Naive thymus-derived CD4-positive, alpha-beta T cell (primary cell): ENCODE measurements at regions of chr19 and their contacts with region 1.

Region 1: DNA sequence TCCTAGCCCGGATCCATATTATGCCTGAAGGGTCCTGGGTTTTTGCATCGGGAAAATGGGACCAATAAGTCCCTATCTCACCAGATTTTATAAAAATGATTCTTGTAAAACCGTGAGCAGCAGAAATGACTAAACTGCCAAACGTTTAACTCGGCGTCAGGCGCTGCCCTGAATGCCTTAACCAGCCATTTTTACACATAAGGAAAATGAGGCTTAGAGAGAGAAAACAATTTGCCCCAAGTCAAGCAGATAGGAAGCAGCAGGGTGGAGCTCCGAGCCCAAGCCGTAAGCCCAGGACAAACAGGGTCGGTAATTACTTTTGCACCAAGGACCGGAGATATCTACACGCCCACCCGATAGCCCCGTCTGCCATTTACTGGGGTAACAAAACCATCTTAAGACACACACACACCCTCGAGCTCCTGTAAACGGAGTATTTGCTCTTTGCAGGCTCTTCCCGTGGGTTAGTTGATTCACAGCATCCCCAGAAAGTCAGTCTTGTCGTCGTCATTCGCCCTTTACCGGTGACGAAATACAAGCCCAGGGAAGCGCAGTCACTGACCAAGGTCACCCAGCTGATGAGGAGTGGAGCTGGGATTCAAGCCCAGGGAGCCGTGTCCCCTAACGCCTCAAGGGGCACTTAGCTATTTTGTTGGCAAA is 16.0 kb upstream of the MRI1 start:
- DNase-seq: peak in 1 of 9 donors; percentile 27
- ATAC-seq: no peak
- H3K4me3 ChIP-seq: peak overlapping the region; percentile 72
- H3K4me3 Mint-ChIP-seq: peak overlapping the region; percentile 84 to 96 (median 90)
- H3K27ac ChIP-seq: peak overlapping the region; percentile 99
- H3K27ac Mint-ChIP-seq: peak overlapping the region; percentile 80 to 97 (median 94)
- H3K4me1 ChIP-seq: peaks cover 10 to 17% of the 10 kb centered on the region in 2 donors
- H3K4me1 Mint-ChIP-seq: peaks cover 15 to 46% (median 28%) of the 10 kb centered on the region in 7 donors
- H3K27me3 ChIP-seq: no peaks in the 10 kb centered on the region
- H3K27me3 Mint-ChIP-seq: no peaks in the 10 kb centered on the region

Region 2: GRCh38 chr19:13557756-13558398 is 190.4 kb before region 1 on chr19:
- CTCF ChIA-PET with region 1: no interaction called
- POLR2A ChIA-PET with region 1: no interaction called
- intact Hi-C with region 1: no loop called
- DNase-seq: peak in 2 of 9 donors; percentile 14 to 16
- ATAC-seq: no peak
- H3K4me3 ChIP-seq: no peak overlapping the region
- H3K4me3 Mint-ChIP-seq: no peak overlapping the region
- H3K27ac ChIP-seq: no peak overlapping the region
- H3K27ac Mint-ChIP-seq: no peak overlapping the region
- H3K4me1 ChIP-seq: no peaks in the 10 kb centered on the region
- H3K4me1 Mint-ChIP-seq: peaks cover 0 to 2% (median 0%) of the 10 kb centered on the region in 7 donors
- H3K27me3 ChIP-seq: peaks cover 0 to 3% of the 10 kb centered on the region in 2 donors
- H3K27me3 Mint-ChIP-seq: peaks cover 6 to 45% (median 27%) of the 10 kb centered on the region in 5 donors

Region 3: DNA sequence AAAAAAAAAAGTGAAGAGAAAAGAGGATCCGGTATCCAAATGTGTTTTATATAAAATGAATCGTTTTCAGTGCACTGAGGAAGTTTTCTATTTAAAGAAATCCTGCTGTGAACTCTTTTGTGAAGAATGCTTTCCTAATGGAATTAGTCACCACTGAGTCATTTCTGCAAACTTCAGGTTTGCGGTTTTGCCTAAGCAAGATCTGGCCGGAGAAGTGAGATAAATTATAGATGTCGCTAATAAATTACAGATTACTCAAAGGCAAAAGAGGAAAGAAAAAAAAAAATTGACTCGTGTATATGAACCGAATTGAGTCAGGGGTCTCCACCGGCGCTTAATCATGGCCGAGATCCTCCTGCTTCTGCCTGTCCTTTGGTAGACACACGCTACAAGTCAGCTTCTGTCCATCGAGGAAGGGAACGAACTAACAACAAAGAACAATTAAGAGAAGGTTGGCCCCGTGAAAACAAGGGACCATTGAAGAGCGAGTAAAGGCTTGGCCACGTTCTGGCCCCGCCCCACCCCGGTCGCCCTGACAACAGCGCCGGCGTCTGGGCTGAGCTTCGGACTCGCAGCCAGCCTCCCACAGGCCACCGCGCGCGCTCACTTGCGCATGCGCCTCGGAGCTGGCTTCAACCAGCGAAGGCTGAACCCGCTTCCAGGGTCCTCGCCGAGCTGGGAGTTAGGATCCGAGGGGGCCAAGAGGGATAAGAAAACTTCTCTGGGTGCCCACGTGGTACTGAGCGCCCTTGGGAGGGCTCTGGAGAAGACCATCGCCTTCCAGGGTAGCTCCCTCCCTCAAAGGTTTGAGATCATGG is 16.9 kb before region 1 on chr19:
- CTCF ChIA-PET with region 1: interaction called, 6 read pairs
- POLR2A ChIA-PET with region 1: interaction called, 32 read pairs
- intact Hi-C with region 1: loop called (anchors 1 kb)
- DNase-seq: peak; percentile 85 to 95 (median 91)
- ATAC-seq: peak; percentile 100
- H3K4me3 ChIP-seq: peak overlapping the region; percentile 89
- H3K4me3 Mint-ChIP-seq: peak overlapping the region; percentile 82 to 95 (median 92)
- H3K27ac ChIP-seq: peak overlapping the region; percentile 75
- H3K27ac Mint-ChIP-seq: peak overlapping the region; percentile 68 to 95 (median 88)
- H3K4me1 ChIP-seq: peaks cover 3 to 7% of the 10 kb centered on the region in 2 donors
- H3K4me1 Mint-ChIP-seq: peaks cover 6 to 19% (median 11%) of the 10 kb centered on the region in 7 donors
- H3K27me3 ChIP-seq: no peaks in the 10 kb centered on the region
- H3K27me3 Mint-ChIP-seq: no peaks in the 10 kb centered on the region

Region 4: DNA sequence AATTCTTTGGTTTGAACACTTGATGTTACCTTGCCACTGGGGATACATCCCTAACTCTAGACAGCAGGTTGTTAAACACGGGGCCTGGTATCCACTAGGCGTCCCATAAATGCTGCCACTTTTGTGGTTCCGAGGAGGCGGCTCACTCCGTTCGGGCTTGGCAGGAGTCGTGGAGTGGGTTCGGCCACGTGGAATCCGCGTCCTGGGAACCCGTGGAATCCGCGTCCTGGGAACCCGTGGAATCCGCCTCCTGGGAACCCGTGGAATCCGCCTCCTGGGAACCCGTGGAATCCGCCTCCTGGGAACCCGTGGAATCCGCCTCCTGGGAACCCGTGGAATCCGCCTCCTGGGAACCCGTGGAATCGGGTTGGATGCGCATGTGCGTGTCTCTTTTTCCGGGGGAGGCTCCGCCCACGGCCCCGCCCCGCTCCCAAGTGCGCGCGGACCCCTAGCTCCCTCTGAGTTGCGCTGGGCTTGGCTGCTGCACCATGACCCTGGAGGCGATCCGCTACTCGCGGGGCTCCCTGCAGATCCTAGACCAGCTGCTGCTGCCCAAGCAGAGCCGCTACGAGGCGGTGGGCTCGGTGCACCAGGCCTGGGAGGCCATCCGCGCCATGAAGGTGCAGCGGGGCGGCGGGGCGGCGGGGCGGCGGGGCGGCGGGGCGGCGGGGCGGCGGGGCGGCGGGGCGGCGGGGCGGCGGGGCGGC is 16.0 kb after region 1 on chr19 and contains the start of gene MRI1:
- CTCF ChIA-PET with region 1: no interaction called
- POLR2A ChIA-PET with region 1: interaction called, 8 read pairs
- intact Hi-C with region 1: loop called (anchors 1 to 2 kb)
- DNase-seq: peak; percentile 23 to 70 (median 43)
- ATAC-seq: peak; percentile 85
- H3K4me3 ChIP-seq: peak within 1 kb of the TSS; percentile 67
- H3K4me3 Mint-ChIP-seq: peak within 1 kb of the TSS; percentile 76 to 94 (median 90)
- H3K27ac ChIP-seq: peak within 1 kb of the TSS; percentile 84
- H3K27ac Mint-ChIP-seq: peak within 1 kb of the TSS; percentile 82 to 94 (median 89)
- H3K4me1 ChIP-seq: peaks cover 0 to 11% of the 10 kb centered on the region in 2 donors
- H3K4me1 Mint-ChIP-seq: peaks cover 8 to 25% (median 18%) of the 10 kb centered on the region in 7 donors
- H3K27me3 ChIP-seq: no peaks in the 10 kb centered on the region
- H3K27me3 Mint-ChIP-seq: no peaks in the 10 kb centered on the region
- total RNA-seq, gene MRI1: 29.1 to 56.2 (median 49.2) TPM

Region 5: DNA sequence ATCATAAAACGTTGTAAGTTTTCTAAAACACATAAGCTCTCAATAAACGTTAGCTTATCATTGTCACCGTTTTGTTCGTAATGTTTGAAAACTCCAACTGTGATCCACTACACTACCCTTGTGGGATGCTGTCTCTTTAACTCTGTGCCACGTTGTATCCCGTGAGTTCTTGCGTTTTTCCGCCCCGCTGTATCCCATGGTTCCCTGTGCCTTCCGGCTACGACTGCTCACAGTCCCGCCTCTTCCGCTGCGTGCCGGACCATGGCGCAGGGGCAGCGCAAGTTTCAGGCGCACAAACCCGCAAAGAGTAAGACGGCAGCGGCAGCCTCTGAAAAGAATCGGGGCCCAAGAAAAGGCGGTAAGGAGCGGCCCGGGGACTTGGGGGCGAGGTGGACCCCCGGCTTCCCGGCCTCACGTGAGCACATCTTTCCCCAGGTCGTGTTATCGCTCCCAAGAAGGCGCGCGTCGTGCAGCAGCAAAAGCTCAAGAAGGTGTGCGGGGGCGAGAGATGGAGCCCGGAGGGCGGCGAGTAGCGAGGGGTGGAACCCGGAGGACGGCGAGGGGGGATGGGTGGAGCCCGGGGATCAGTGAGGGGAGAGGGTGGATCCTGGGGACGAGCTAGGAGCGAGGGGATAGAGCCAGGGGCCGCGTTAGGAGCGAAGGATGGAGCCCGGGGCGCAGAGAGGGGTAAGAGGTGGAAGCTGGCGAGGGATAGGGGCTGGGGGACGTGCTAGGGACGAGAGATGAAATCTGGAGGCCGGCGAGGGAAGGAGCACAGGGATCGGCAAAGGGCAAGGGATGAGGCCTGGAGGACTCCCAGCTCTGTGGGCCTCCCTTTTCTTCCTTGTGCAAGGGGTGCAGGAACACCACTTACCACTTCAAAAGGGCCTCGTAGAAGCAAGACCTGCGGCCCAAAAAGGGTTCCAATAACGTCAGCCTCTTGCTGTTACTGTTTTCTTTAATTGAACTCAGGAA is 26.2 kb after region 1 on chr19 and contains the start of gene C19orf53:
- CTCF ChIA-PET with region 1: interaction called, 3 read pairs
- POLR2A ChIA-PET with region 1: interaction called, 19 read pairs
- intact Hi-C with region 1: loop called (anchors 1 kb)
- DNase-seq: peak; percentile 74 to 89 (median 86)
- ATAC-seq: peak; percentile 99
- H3K4me3 ChIP-seq: peak within 1 kb of the TSS; percentile 94
- H3K4me3 Mint-ChIP-seq: peak within 1 kb of the TSS; percentile 90 to 100 (median 99)
- H3K27ac ChIP-seq: peak within 1 kb of the TSS; percentile 90
- H3K27ac Mint-ChIP-seq: peak within 1 kb of the TSS; percentile 92 to 100 (median 97)
- H3K4me1 ChIP-seq: peaks cover 9 to 15% of the 10 kb centered on the region in 2 donors
- H3K4me1 Mint-ChIP-seq: peaks cover 10 to 37% (median 28%) of the 10 kb centered on the region in 7 donors
- H3K27me3 ChIP-seq: no peaks in the 10 kb centered on the region
- H3K27me3 Mint-ChIP-seq: no peaks in the 10 kb centered on the region
- total RNA-seq, gene C19orf53: 57.2 to 108 (median 86.2) TPM

Region 6: GRCh38 chr19:13794757-13795589 is 46.7 kb after region 1 on chr19 and contains the start of gene ZSWIM4:
- CTCF ChIA-PET with region 1: no interaction called
- POLR2A ChIA-PET with region 1: interaction called, 8 read pairs
- intact Hi-C with region 1: loop called in 1 of 2 experiments (anchors 1 kb)
- DNase-seq: peak; percentile 67 to 93 (median 77)
- ATAC-seq: peak; percentile 95
- H3K4me3 ChIP-seq: peak within 1 kb of the TSS; percentile 84
- H3K4me3 Mint-ChIP-seq: peak within 1 kb of the TSS; percentile 93 to 97 (median 94)
- H3K27ac ChIP-seq: peak within 1 kb of the TSS; percentile 56
- H3K27ac Mint-ChIP-seq: peak within 1 kb of the TSS; percentile 89 to 97 (median 95)
- H3K4me1 ChIP-seq: peaks cover 14 to 21% of the 10 kb centered on the region in 2 donors
- H3K4me1 Mint-ChIP-seq: peaks cover 22 to 46% (median 37%) of the 10 kb centered on the region in 7 donors
- H3K27me3 ChIP-seq: no peaks in the 10 kb centered on the region
- H3K27me3 Mint-ChIP-seq: no peaks in the 10 kb centered on the region
- total RNA-seq, gene ZSWIM4: 4.8 to 7.8 (median 5.9) TPM

Region 7: DNA sequence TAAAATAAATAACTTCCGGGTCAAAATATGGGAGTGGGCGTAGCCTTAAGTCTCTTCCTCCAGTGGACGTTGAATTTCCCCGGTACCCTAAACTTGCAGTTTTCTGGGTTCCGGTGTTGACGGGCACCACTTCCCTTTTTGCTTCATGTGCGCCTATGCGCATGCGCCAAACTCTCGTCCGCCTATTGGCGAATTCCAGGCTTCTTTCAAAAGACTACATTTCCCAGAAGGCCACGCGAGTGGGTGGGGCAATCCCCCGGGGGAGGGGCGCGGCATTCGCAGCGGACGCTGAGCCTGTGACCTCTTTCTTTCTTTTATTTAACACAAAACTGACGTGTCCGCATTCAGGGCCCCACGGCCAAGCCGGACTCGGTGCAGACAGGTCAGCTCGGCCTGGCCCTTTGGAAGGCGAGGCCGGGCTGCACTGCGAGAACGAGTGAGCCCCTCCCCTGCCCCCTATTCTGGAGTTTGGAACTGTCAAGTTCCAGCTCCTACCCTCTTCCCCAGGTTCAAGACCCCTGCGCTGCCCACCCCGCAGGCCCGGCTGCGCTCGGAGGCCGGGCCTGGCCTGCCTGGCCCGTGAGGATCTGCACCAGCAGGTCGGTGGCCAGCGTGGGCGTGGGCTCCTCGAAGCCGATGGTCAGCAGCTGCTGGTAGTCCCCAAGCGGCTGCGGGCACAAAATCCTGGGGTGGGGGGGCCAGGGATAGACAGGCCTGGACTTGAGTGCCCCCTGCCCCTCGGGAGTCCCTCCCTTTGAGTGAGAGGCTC is 333.2 kb after region 1 on chr19:
- CTCF ChIA-PET with region 1: no interaction called
- POLR2A ChIA-PET with region 1: no interaction called
- intact Hi-C with region 1: loop called in 1 of 2 experiments (anchors 1 kb)
- DNase-seq: peak; percentile 96 to 100 (median 99)
- ATAC-seq: peak; percentile 97
- H3K4me3 ChIP-seq: peak overlapping the region; percentile 86
- H3K4me3 Mint-ChIP-seq: peak overlapping the region; percentile 80 to 98 (median 94)
- H3K27ac ChIP-seq: peak overlapping the region; percentile 80
- H3K27ac Mint-ChIP-seq: peak overlapping the region; percentile 86 to 98 (median 95)
- H3K4me1 ChIP-seq: peaks cover 5 to 15% of the 10 kb centered on the region in 2 donors
- H3K4me1 Mint-ChIP-seq: peaks cover 0 to 27% (median 17%) of the 10 kb centered on the region in 7 donors
- H3K27me3 ChIP-seq: no peaks in the 10 kb centered on the region
- H3K27me3 Mint-ChIP-seq: no peaks in the 10 kb centered on the region

Region 8: DNA sequence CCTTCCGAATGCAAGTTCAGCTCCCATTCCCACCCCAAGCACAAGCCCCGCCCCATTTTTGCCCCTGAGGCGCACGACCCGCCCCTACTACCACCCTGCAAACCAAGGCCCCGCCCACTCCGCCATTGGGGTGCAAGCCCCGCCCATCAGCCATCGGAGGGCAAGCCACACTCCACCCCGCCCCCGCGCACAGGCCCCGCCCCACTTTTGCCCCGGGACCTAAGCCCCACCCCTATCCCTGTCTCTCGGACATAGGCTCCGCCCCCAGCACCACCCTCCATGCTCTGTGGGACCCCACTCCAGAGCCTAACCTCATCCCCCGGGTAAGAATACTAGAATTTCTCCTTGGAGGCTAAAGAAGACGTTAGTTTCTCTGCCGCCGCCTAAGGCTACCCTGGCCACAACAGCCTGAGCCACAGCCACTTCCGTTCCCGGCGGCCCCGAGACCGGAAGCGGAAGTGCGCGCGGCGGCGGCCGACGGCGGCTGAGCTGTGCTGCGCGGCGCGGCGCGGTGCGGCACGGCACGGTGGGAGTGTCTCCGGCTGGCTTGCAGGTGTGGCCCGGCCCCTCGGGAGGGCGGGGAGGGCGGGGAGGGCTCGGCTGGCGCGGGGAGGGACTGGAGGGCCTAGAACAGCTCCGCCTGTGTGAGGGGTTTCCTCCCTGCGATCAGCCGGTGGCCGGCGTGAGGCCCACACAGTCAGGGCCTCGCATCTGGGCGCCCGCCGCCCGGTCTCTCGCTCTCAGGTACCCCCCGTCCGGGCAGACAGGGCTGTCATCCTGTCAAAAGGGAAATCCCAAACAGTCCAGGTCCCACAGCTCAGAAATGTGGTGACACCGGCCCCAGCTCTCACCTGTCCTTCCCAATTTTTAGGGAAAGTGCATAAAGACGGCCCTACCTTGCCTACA is 941.6 kb after region 1 on chr19 and contains the start of gene ZNF333:
- CTCF ChIA-PET with region 1: no interaction called
- POLR2A ChIA-PET with region 1: no interaction called
- intact Hi-C with region 1: loop called in 1 of 2 experiments (anchors 10 kb)
- DNase-seq: peak; percentile 92 to 99 (median 96)
- ATAC-seq: peak; percentile 94
- H3K4me3 ChIP-seq: peak within 1 kb of the TSS; percentile 93
- H3K4me3 Mint-ChIP-seq: peak within 1 kb of the TSS; percentile 81 to 99 (median 94)
- H3K27ac ChIP-seq: peak within 1 kb of the TSS; percentile 97
- H3K27ac Mint-ChIP-seq: peak within 1 kb of the TSS; percentile 93 to 100 (median 99)
- H3K4me1 ChIP-seq: peaks cover 6 to 16% of the 10 kb centered on the region in 2 donors
- H3K4me1 Mint-ChIP-seq: peaks cover 5 to 26% (median 23%) of the 10 kb centered on the region in 7 donors
- H3K27me3 ChIP-seq: no peaks in the 10 kb centered on the region
- H3K27me3 Mint-ChIP-seq: peaks cover 0 to 2% (median 0%) of the 10 kb centered on the region in 5 donors
- total RNA-seq, gene ZNF333: 15.4 to 56.3 (median 34.7) TPM